CD8-positive, alpha-beta T cell (primary cell): ENCODE measurements at regions of chr13 and their contacts with region 1.

Region 1: GRCh38 chr13:28324181-28324789 is 170.6 kb downstream of the FLT1 start:
- DNase-seq: peak; percentile 9 to 71 (median 53)
- ATAC-seq: peak; percentile 69
- H3K4me3 ChIP-seq: no peak overlapping the region
- H3K4me3 Mint-ChIP-seq: no peak overlapping the region
- H3K27ac ChIP-seq: no peak overlapping the region
- H3K27ac Mint-ChIP-seq: no peak overlapping the region
- H3K4me1 ChIP-seq: no peaks in the 10 kb centered on the region
- H3K4me1 Mint-ChIP-seq: no peaks in the 10 kb centered on the region
- H3K27me3 ChIP-seq: no peaks in the 10 kb centered on the region
- H3K27me3 Mint-ChIP-seq: no peaks in the 10 kb centered on the region
- CTCF ChIP-seq: peak; percentile 57

Region 2: GRCh38 chr13:27980280-27980998 is 343.8 kb before region 1 on chr13:
- CTCF ChIA-PET with region 1: no interaction called
- POLR2A ChIA-PET with region 1: no interaction called
- intact Hi-C with region 1: no loop called
- DNase-seq: no peak
- ATAC-seq: no peak
- H3K4me3 ChIP-seq: no peak overlapping the region
- H3K4me3 Mint-ChIP-seq: no peak overlapping the region
- H3K27ac ChIP-seq: no peak overlapping the region
- H3K27ac Mint-ChIP-seq: no peak overlapping the region
- H3K4me1 ChIP-seq: no peaks in the 10 kb centered on the region
- H3K4me1 Mint-ChIP-seq: peaks cover 29% of the 10 kb centered on the region
- H3K27me3 ChIP-seq: peaks cover 6 to 24% of the 10 kb centered on the region in 2 experiments
- H3K27me3 Mint-ChIP-seq: peaks cover 64% of the 10 kb centered on the region
- CTCF ChIP-seq: no peak

Region 3: GRCh38 chr13:28297341-28297740 is 26.9 kb before region 1 on chr13:
- CTCF ChIA-PET with region 1: no interaction called
- POLR2A ChIA-PET with region 1: no interaction called
- intact Hi-C with region 1: no loop called
- DNase-seq: no peak
- ATAC-seq: no peak
- H3K4me3 ChIP-seq: no peak overlapping the region
- H3K4me3 Mint-ChIP-seq: no peak overlapping the region
- H3K27ac ChIP-seq: no peak overlapping the region
- H3K27ac Mint-ChIP-seq: no peak overlapping the region
- H3K4me1 ChIP-seq: no peaks in the 10 kb centered on the region
- H3K4me1 Mint-ChIP-seq: peaks cover 5% of the 10 kb centered on the region
- H3K27me3 ChIP-seq: no peaks in the 10 kb centered on the region
- H3K27me3 Mint-ChIP-seq: no peaks in the 10 kb centered on the region
- CTCF ChIP-seq: no peak

Region 4: DNA sequence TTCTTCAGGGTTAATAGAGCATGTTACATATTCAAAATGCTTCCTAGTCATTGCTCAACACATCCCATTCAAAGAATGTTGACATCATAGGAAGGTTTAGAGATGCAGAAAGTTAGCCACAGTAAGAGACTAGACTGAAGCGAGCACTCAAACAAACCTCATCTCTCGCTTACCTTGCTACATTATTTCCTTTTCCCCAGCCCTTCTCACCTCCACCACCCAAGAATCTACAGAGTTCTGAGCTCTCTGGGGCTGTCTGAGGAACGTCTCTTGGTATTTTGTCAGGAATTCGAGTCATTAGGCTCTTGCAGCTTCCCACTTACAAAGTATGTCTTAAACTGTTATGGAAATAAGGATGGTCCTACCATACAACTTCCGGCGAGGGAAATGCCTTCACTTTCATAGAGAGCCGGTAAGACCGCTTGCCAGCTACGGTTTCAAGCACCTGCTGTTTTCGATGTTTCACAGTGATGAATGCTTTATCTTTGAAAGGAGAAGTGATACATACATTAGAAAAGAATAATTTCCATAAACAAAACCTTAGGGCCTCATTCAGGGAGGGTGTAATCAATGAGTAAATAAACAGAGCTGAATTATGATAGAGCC is 105.5 kb after region 1 on chr13:
- CTCF ChIA-PET with region 1: no interaction called
- POLR2A ChIA-PET with region 1: no interaction called
- intact Hi-C with region 1: no loop called
- DNase-seq: no peak
- ATAC-seq: no peak
- H3K4me3 ChIP-seq: no peak overlapping the region
- H3K4me3 Mint-ChIP-seq: no peak overlapping the region
- H3K27ac ChIP-seq: no peak overlapping the region
- H3K27ac Mint-ChIP-seq: no peak overlapping the region
- H3K4me1 ChIP-seq: no peaks in the 10 kb centered on the region
- H3K4me1 Mint-ChIP-seq: peaks cover 3% of the 10 kb centered on the region
- H3K27me3 ChIP-seq: no peaks in the 10 kb centered on the region
- H3K27me3 Mint-ChIP-seq: no peaks in the 10 kb centered on the region
- CTCF ChIP-seq: no peak

Region 5: DNA sequence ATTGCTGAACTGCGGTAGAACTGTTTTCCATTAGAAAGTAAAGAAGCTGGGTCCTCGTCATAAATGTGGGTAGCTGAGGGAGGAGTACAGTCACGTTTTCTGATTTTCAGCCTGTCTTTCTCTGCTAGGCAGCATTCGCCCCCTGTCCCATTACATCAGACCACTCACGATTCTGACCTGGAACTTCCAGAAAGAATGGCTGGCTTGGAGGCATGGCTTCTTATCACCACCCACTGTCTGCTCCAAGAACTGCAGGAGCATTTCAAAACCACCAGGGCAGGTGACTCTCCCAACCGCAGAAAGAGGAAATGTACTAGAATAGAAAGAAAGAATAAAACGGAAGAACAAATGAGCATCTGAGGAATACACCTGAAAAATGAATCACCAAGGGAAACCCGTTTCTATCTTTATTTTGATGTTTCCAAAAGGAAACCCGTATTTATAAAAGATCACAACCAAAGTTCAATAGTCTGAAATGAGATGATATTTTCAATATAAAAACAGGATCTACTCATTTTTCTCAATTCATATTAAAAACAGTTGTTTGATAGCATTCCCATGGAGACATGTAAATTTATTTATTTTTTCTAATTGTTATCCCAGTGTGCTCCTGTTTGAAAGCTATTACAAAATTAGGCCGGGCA is 312.5 kb after region 1 on chr13:
- CTCF ChIA-PET with region 1: interaction called, 6 read pairs
- POLR2A ChIA-PET with region 1: no interaction called
- intact Hi-C with region 1: loop called (anchors 1 kb)
- DNase-seq: peak in 7 of 9 experiments; percentile 16 to 78 (median 53)
- ATAC-seq: peak; percentile 93
- H3K4me3 ChIP-seq: no peak overlapping the region
- H3K4me3 Mint-ChIP-seq: peak overlapping the region; percentile 0
- H3K27ac ChIP-seq: no peak overlapping the region
- H3K27ac Mint-ChIP-seq: peak overlapping the region; percentile 0
- H3K4me1 ChIP-seq: no peaks in the 10 kb centered on the region
- H3K4me1 Mint-ChIP-seq: peaks cover 10% of the 10 kb centered on the region
- H3K27me3 ChIP-seq: no peaks in the 10 kb centered on the region
- H3K27me3 Mint-ChIP-seq: peaks cover 9% of the 10 kb centered on the region
- CTCF ChIP-seq: peak; percentile 62

Region 6: DNA sequence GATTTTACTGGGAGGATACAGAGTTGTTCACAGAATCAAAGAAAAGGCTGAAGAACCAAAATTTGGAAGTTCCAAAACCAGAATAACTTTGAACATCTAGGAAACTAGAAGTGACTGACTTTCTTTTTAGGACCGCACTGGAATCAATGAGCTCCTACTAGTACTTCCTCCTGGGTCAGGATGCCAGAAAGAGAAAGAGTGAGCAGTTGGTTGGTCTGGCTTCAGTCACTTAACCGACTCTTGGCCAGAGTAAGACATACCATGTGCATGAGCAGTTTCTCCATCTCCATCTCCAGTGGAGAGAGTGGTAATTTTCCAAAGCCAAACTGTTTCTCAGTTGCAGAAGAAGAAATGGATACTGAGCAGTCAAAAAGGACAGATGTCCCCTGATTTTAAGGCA is 468.7 kb after region 1 on chr13:
- CTCF ChIA-PET with region 1: interaction called, 20 read pairs
- POLR2A ChIA-PET with region 1: no interaction called
- intact Hi-C with region 1: loop called in 1 of 2 experiments (anchors 1 kb)
- DNase-seq: no peak
- ATAC-seq: no peak
- H3K4me3 ChIP-seq: no peak overlapping the region
- H3K4me3 Mint-ChIP-seq: no peak overlapping the region
- H3K27ac ChIP-seq: no peak overlapping the region
- H3K27ac Mint-ChIP-seq: no peak overlapping the region
- H3K4me1 ChIP-seq: no peaks in the 10 kb centered on the region
- H3K4me1 Mint-ChIP-seq: no peaks in the 10 kb centered on the region
- H3K27me3 ChIP-seq: peaks cover 0 to 3% of the 10 kb centered on the region in 2 experiments
- H3K27me3 Mint-ChIP-seq: peaks cover 36% of the 10 kb centered on the region
- CTCF ChIP-seq: no peak

Region 7: GRCh38 chr13:29362849-29363604 is 1038.7 kb after region 1 on chr13:
- CTCF ChIA-PET with region 1: interaction called, 3 read pairs
- POLR2A ChIA-PET with region 1: no interaction called
- intact Hi-C with region 1: loop called in 1 of 2 experiments (anchors 10 kb)
- DNase-seq: peak in 6 of 9 experiments; percentile 9 to 56 (median 28)
- ATAC-seq: peak; percentile 48
- H3K4me3 ChIP-seq: no peak overlapping the region
- H3K4me3 Mint-ChIP-seq: no peak overlapping the region
- H3K27ac ChIP-seq: no peak overlapping the region
- H3K27ac Mint-ChIP-seq: no peak overlapping the region
- H3K4me1 ChIP-seq: no peaks in the 10 kb centered on the region
- H3K4me1 Mint-ChIP-seq: peaks cover 4% of the 10 kb centered on the region
- H3K27me3 ChIP-seq: no peaks in the 10 kb centered on the region
- H3K27me3 Mint-ChIP-seq: peaks cover 20% of the 10 kb centered on the region
- CTCF ChIP-seq: peak; percentile 69